ENCODE measurements at regions of chr17 and their contacts with region 1.

Region 1: DNA sequence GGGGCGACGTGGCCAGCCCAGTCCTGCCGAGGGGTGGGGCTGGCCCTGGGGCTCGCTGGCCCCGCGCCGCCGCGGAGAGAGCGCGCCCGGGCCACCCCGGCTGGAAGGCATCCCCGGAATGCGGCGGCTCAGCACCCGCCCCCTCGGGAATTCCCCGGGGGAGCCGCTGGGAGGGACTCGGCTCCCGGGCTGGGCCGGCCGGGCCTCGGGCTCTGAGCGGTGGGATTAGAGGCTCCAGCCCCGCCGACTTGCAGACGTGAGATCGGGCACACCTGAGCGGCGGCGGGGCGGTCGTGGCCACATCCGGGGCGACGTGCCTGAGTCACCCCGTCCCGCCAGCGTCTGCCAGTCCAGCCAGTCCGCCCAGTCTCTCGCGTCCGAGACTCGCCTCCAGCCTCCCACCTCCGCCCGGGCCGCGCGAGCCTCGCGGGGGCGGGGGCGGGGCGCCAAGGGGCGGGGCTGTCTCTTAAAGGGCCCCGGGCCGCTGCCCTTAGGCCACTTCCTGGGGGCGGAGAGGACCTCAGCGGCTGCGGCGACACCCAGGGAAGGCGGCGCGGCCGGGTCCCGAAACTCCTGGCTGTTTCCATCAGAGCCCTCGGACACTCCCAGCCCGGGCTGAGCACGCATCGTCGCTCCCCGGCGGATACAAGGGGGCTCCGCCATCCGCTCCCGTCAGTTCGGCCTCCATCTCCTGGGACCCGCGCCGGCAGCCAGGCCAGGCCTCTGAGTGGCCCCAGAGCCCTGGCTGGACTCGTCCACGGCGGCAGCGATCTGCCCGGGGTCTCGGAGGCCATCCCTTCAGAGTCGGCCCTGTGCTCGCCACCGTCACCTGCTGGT is at the start of gene KCTD11:
- DNase-seq: peak; percentile 91
- ATAC-seq: peak; percentile 69
- H3K4me3 Mint-ChIP-seq: peak within 1 kb of the TSS; percentile 78
- H3K27ac Mint-ChIP-seq: peak within 1 kb of the TSS; percentile 86
- H3K4me1 Mint-ChIP-seq: peaks cover 56% of the 10 kb centered on the region
- H3K27me3 Mint-ChIP-seq: no peaks in the 10 kb centered on the region
- total RNA-seq, gene KCTD11: 6.0 to 6.1 TPM

Region 2: GRCh38 chr17:7329374-7329996 is 22.4 kb before region 1 on chr17:
- CTCF ChIA-PET with region 1: interaction called, 61 read pairs
- DNase-seq: peak; percentile 99
- ATAC-seq: peak; percentile 64
- H3K4me3 Mint-ChIP-seq: peak overlapping the region; percentile 96
- H3K27ac Mint-ChIP-seq: peak overlapping the region; percentile 97
- H3K4me1 Mint-ChIP-seq: peaks cover 33% of the 10 kb centered on the region
- H3K27me3 Mint-ChIP-seq: no peaks in the 10 kb centered on the region

Region 3: GRCh38 chr17:7374353-7374752 is 22.5 kb after region 1 on chr17:
- CTCF ChIA-PET with region 1: interaction called, 22 read pairs
- DNase-seq: no peak
- ATAC-seq: no peak
- H3K4me3 Mint-ChIP-seq: no peak overlapping the region
- H3K27ac Mint-ChIP-seq: no peak overlapping the region
- H3K4me1 Mint-ChIP-seq: no peaks in the 10 kb centered on the region
- H3K27me3 Mint-ChIP-seq: peaks cover 14% of the 10 kb centered on the region

Region 4: DNA sequence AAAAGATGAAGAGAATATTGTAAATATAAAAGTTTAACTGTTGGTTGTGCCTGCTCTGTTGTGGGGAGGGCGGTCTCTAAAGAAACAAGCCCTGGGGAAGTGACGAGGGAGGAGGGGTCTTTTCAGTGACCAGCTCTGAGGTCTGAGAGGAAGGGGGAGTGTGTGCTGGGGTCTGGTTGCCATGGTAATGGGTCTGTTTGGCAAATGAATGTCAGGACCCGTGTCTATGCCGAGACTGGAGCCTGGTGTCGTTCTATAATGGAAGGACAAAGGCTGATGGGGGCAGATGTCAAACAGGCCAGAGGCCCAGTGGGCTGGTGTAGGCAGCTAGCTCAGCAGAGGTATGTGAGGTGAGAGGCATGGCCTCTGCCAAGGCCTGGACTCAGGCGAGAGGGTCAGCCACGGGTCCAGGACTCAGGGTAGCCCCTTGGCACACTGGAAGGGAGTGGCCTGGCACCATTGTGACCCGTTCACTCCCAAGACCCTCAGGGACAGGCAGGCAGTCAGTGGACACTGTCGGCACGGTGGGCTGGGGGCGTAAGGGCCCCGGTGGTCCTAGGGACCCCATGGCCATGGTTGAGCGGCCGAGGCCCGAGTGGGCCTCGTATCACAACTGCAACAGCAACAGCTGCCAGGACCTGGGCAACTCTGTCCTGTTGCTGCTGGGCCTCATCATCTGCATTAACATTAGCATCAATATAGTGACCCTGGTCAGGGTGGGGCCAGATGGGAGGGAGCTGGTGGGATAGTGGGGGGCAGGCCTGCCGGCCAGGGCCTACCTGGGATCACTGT is 68.1 kb after region 1 on chr17 and contains the start of gene SPEM1:
- CTCF ChIA-PET with region 1: interaction called, 13 read pairs
- DNase-seq: no peak
- ATAC-seq: no peak
- H3K4me3 Mint-ChIP-seq: no peak within 1 kb of the TSS
- H3K27ac Mint-ChIP-seq: no peak within 1 kb of the TSS
- H3K4me1 Mint-ChIP-seq: no peaks in the 10 kb centered on the region
- H3K27me3 Mint-ChIP-seq: no peaks in the 10 kb centered on the region
- total RNA-seq, gene SPEM1: not detected

Region 5: DNA sequence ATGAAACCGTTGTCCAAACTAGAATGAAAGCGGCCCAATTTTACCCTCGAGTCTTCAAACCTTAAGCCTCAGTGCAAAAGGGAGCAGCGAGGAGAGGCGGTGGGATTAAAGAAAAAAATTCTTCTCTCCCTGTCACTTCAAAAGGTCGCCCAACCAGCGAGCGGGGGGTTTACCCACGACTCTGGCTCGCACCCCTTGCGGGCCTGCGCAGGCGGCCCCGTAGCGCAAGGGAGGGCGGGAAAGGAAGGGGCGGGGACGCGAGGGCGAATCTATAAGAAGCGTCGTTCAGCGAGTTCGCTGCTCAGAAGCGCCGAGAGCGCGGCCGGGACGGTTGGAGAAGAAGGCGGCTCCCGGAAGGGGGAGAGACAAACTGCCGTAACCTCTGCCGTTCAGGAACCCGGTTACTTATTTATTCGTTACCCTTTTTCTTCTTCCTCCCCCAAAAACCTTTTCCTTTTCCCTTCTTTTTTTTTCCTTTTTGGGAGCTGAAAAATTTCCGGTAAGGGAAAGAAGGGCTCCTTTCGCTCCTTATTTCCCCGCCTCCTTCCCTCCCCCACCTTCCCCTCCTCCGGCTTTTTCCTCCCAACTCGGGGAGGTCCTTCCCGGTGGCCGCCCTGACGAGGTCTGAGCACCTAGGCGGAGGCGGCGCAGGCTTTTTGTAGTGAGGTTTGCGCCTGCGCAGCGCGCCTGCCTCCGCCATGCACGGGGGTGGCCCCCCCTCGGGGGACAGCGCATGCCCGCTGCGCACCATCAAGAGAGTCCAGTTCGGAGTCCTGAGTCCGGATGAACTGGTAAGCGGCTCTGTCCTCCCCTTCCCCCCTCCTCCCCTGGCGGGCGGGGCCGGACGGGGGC is 132.4 kb after region 1 on chr17 and contains the start of gene POLR2A:
- CTCF ChIA-PET with region 1: interaction called, 10 read pairs
- DNase-seq: peak; percentile 98
- ATAC-seq: peak; percentile 69
- H3K4me3 Mint-ChIP-seq: peak within 1 kb of the TSS; percentile 90
- H3K27ac Mint-ChIP-seq: peak within 1 kb of the TSS; percentile 100
- H3K4me1 Mint-ChIP-seq: peaks cover 67% of the 10 kb centered on the region
- H3K27me3 Mint-ChIP-seq: no peaks in the 10 kb centered on the region
- total RNA-seq, gene POLR2A: 198 to 228 TPM